ENCODE measurements at regions of chr2 and their contacts with region 1.

Region 1: DNA sequence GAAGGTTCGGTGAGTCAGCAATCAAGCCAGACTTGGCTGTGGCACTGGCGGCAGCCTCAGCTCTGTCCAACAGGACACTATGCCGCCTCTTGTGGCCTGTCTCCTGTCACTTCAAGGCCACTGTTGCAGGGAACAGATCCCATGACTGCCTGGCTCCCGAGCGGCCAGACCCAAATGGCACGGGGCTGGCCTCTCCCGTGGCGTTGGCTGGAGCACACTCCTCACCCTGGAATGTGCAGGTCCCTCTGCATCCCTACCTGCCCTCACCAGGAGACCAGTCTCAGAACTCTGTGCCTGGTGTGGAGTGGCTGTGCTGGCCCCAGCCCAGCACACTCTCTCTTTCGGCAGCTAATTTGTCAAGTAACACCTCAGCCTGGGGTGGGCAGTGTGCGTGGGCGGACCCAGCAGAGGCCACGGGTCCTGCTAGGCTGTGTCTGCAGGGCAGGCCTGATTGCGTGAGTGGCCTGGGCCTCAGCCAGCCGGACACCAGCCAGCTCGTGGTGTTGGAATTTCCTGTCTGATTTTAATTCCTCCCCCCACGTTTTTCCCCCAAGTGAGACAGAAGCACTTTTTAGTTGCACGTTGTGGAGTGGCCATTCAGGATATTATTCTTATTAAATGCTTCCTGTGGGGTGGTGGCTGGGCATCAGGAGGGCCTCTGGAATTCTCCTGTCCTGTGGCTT is 179.3 kb downstream of the GLI2 start:
- DNase-seq: peak; percentile 69
- H3K4me3 ChIP-seq: no peak overlapping the region
- H3K27ac ChIP-seq: no peak overlapping the region
- H3K4me1 ChIP-seq: peaks cover 17% of the 10 kb centered on the region
- H3K27me3 ChIP-seq: no peaks in the 10 kb centered on the region
- CTCF ChIP-seq: peak in 1 of 2 donors; percentile 2

Region 2: DNA sequence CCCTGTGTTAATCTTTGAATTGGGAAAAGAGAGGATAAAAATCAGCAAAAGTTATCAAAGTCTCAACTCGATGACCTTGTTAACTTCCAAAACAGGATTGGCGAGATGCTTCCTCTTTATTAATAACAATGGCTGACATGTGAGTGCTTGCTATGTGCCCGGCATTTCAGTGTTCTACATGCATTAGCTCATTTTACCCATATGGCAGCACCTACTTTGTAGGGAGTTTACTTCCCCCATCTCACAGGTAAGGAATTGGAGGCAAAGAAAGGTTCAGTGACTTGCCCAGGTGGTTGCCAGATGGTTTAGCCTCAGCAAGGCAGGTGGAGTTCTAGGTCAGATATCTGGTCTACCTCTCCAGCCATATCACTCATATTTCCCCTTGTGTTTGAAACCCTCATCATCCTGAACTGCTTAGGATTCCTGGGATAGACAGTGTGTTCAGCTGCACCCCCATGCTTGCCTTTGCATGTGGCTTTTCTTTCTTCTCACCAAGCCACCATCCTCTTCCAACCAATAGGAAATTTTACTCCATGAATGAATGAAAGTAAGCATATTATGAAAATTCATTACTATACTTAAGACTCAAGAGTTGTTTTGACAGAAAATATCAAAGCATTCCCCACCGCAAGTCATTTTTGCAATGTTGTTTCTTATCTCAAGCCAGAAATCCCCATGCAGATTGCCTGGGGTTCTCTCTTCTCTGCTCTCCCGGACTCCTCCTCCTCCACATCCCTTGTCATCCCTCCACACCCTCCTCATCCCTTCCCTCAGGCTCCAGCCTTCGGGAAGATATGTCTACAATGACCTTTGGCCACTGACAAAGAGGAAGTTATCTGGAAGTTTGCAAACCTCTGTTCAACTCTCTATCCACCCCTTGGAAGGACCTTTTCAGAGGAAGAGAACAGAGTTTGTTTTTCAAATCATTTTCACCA is 357.9 kb after region 1 on chr2:
- CTCF ChIA-PET with region 1: no interaction called
- dilution Hi-C with region 1: loop called (anchors 5 kb)
- in situ Hi-C with region 1: no loop called
- intact Hi-C with region 1: no loop called
- DNase-seq: no peak
- H3K4me3 ChIP-seq: no peak overlapping the region
- H3K27ac ChIP-seq: no peak overlapping the region
- H3K4me1 ChIP-seq: no peaks in the 10 kb centered on the region
- H3K27me3 ChIP-seq: no peaks in the 10 kb centered on the region
- CTCF ChIP-seq: no peak